Caco-2 (cell line): ENCODE measurements at regions of chr2 and their contacts with region 1.

Region 1: DNA sequence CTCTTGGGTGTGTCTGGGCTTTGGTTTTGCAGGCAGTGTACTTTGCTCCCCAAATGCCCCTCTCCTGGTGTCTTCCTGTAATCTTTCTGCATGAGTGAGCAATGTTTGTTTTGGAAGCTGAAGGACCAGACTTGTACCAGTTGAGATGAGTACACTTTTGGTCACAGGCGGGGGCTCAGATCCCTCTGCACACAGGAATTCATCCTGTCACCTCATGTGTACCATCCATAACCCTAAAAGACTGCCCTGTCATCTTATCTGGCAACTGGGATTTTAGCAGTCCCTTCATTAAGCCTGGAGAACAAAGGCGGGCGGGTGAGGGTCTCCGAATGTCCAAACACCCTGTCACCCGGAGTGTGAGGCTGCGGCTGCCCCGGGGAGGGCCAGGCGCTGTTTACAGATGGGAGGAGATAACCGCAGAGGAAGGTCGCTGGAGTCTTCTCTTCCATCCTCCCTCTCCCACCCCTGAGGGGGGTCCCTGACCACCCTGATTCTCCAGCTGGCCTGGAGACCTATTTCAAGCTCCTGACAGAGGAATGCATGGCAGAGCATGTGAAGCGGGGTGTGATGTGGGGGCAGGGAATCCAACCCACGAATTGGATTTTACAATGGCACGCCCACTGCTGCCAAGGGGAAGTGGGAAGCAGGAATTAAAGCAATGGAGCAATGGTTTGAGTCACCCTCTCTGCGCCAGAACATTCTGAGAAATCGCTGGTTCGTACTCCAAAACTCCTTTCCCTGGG is 158.2 kb upstream of the MYCN start:
- DNase-seq: peak; percentile 92 to 95
- H3K4me3 ChIP-seq: no peak overlapping the region
- H3K4me3 Mint-ChIP-seq: peak overlapping the region; percentile 31
- H3K27ac Mint-ChIP-seq: peak overlapping the region; percentile 17
- H3K4me1 ChIP-seq: peaks cover 44% of the 10 kb centered on the region
- H3K4me1 Mint-ChIP-seq: peaks cover 45% of the 10 kb centered on the region
- H3K27me3 ChIP-seq: no peaks in the 10 kb centered on the region
- H3K27me3 Mint-ChIP-seq: no peaks in the 10 kb centered on the region
- CTCF ChIP-seq: no peak

Region 2: GRCh38 chr2:15730545-15731212 is 51.5 kb before region 1 on chr2:
- CTCF ChIA-PET with region 1: no interaction called
- POLR2A ChIA-PET with region 1: no interaction called
- intact Hi-C with region 1: loop called (anchors 1 kb)
- DNase-seq: no peak
- H3K4me3 ChIP-seq: no peak overlapping the region
- H3K4me3 Mint-ChIP-seq: no peak overlapping the region
- H3K27ac Mint-ChIP-seq: no peak overlapping the region
- H3K4me1 ChIP-seq: peaks cover 42% of the 10 kb centered on the region
- H3K4me1 Mint-ChIP-seq: peaks cover 49% of the 10 kb centered on the region
- H3K27me3 ChIP-seq: no peaks in the 10 kb centered on the region
- H3K27me3 Mint-ChIP-seq: no peaks in the 10 kb centered on the region
- CTCF ChIP-seq: no peak

Region 3: GRCh38 chr2:15769676-15770547 is 12.3 kb before region 1 on chr2:
- CTCF ChIA-PET with region 1: no interaction called
- POLR2A ChIA-PET with region 1: no interaction called
- intact Hi-C with region 1: loop called (anchors 1 kb)
- DNase-seq: no peak
- H3K4me3 ChIP-seq: no peak overlapping the region
- H3K4me3 Mint-ChIP-seq: no peak overlapping the region
- H3K27ac Mint-ChIP-seq: peak overlapping the region; percentile 53
- H3K4me1 ChIP-seq: peaks cover 44% of the 10 kb centered on the region
- H3K4me1 Mint-ChIP-seq: peaks cover 53% of the 10 kb centered on the region
- H3K27me3 ChIP-seq: no peaks in the 10 kb centered on the region
- H3K27me3 Mint-ChIP-seq: no peaks in the 10 kb centered on the region
- CTCF ChIP-seq: no peak

Region 4: GRCh38 chr2:16318474-16319195 is 536.5 kb after region 1 on chr2:
- CTCF ChIA-PET with region 1: no interaction called
- POLR2A ChIA-PET with region 1: no interaction called
- intact Hi-C with region 1: loop called (anchors 10 kb)
- DNase-seq: peak; percentile 71 to 85
- H3K4me3 ChIP-seq: no peak overlapping the region
- H3K4me3 Mint-ChIP-seq: peak overlapping the region; percentile 43
- H3K27ac Mint-ChIP-seq: peak overlapping the region; percentile 96
- H3K4me1 ChIP-seq: peaks cover 57% of the 10 kb centered on the region
- H3K4me1 Mint-ChIP-seq: peaks cover 44% of the 10 kb centered on the region
- H3K27me3 ChIP-seq: no peaks in the 10 kb centered on the region
- H3K27me3 Mint-ChIP-seq: no peaks in the 10 kb centered on the region
- CTCF ChIP-seq: no peak